Dendritic cell treated with granulocyte-macrophage colony-stimulating factor and Interleukin-4, amounts not matched to agents 40 ng/mL and 50 ng/mL, for 4 days (primary cell): ENCODE measurements at regions of chr14 and their contacts with region 1.

Region 1: DNA sequence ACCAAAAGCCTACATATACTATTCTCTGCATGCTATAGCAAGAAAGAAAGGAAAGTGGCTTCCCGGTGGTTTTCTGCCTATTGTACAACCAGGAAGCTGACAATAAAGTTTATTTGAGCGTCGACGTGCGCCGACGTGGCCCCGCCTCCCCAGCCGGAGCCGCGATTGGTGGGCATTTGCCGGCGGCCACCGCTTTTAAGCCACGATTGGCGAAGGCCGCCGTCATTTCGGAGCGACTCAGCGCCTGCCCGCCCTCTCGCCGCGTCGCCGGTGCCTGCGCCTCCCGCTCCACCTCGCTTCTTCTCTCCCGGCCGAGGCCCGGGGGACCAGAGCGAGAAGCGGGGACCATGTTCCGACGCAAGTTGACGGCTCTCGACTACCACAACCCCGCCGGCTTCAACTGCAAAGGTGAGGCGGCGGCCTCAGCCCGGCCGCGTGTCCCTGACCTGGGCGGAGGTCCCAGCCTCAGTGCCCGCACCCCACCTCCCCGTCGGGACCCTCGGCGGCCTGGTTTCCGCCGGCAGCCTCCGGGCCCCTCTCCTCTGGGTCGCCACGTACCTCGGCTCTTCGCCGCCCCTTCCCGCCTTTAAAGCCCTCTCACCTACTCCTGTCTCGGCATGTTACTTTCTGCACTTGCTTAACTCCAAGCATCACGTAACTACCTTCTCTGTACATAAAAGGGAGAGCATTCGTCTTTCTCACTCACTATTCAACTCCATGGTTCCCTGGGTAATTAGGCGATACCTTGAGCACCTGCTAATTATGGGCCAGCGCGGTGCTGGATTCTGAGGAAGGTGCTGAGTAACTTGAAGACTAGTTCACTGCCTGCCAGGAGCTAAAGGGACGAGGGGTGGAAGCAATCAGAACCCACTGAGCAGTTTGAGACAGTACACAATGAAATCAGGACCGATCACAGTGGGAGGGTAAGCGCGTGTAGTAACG is at the start of gene RTRAF:
- H3K4me3 Mint-ChIP-seq: peak within 1 kb of the TSS; percentile 79
- H3K27ac Mint-ChIP-seq: peak within 1 kb of the TSS; percentile 83
- H3K4me1 Mint-ChIP-seq: peaks cover 20% of the 10 kb centered on the region
- H3K27me3 Mint-ChIP-seq: no peaks in the 10 kb centered on the region

Region 2: DNA sequence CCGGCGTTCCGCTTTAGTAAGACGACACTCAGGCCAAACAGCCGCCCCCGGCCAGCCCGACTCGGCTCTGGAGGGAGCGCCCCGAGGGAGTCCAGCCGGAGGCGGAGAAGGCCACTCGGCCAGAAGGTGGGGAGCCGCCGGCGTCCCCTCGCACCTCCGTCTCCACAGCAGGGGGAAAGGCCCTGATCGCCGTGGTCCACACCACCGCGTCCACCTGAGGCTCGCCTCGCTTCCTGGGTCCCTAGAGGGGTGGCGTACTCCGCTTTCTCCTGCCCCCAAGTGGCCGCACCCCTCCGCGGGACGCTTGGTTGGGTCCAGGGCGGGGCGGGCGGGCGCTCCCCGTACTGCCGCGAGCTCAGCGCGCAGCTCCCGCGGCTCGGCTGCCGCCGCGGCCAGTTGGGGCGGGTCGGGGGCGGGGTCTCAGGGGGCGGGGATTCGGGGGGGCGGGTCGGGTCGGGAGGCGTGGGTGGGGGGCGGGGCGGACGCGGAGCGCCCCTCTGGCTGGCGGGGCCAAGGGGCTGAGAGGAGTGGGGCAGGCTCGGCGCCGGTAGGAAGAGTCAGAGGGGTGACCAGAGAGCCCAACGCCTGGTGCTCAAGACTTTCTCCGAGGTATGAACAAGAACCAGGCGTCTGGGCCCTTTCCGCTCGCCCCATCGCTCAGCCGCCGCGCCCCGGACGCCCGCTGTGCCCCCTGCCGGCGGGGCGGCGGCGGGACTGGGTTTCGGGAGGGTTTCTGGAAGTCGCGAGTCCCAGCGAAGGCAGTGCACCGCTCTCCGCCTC is 338.0 kb before region 1 on chr14 and contains the start of gene FRMD6:
- intact Hi-C with region 1: loop called (anchors 5 kb)
- H3K4me3 Mint-ChIP-seq: peak within 1 kb of the TSS; percentile 87
- H3K27ac Mint-ChIP-seq: peak within 1 kb of the TSS; percentile 92
- H3K4me1 Mint-ChIP-seq: peaks cover 23% of the 10 kb centered on the region
- H3K27me3 Mint-ChIP-seq: peaks cover 24% of the 10 kb centered on the region

Region 3: DNA sequence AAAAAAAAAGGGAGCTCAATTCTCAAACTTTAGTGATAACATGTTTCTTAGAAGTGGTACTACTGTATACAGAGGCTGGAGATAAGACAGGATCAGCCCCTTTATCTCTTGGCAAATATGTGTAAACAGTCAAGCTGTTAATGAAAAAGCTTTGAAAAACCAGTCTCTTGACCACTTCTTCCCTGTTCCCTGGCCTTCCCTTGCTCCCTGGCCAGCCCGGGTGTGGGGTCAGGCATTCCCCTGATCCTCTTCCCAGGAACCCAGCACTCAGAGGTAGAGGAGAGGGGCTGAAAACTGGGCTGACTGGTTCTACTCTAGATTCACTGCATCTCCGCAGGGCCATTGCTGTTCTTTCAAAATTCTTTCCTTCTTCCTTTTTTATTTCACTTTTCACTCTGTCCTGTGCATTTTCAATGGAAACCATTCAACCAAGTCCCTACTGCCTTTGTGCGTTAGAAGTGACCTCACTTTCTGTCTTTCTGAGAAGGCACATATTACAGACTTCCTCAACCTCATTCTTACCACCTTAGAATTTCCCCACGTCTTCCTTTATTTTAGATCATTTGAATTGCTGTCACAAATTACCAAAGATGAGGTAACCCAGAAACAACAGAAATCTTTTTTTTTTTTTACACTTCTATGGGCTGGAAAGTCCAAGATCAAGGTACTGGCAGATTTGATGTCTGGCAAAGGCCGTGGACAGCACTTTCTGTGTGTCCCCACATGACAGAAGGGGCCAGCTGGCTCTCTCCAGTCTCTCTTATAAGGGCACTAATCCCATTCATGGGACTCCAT is 123.4 kb before region 1 on chr14:
- intact Hi-C with region 1: loop called (anchors 5 kb)
- H3K4me3 Mint-ChIP-seq: no peak overlapping the region
- H3K27ac Mint-ChIP-seq: no peak overlapping the region
- H3K4me1 Mint-ChIP-seq: peaks cover 26% of the 10 kb centered on the region
- H3K27me3 Mint-ChIP-seq: no peaks in the 10 kb centered on the region

Region 4: DNA sequence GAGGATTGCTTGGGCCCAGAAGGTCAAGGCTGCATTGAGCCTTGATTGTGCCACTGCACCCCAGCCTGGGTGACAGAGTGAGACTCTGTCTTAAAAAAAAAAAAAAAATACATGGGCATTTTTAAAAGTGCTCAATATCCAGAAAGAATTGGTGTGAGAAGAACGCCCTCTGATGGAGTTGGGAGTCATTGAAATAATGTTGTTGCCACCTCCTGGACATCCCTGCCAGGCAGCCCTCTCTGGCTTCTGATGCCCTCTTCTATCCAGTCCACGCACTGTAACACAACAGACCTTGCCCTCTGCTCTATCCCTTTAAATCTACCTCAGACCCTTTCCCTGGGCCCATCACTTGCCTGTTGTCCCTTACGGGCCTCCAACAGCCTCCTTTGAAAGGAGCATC is 282.8 kb after region 1 on chr14:
- intact Hi-C with region 1: loop called (anchors 10 kb)
- H3K4me3 Mint-ChIP-seq: no peak overlapping the region
- H3K27ac Mint-ChIP-seq: no peak overlapping the region
- H3K4me1 Mint-ChIP-seq: peaks cover 18% of the 10 kb centered on the region
- H3K27me3 Mint-ChIP-seq: peaks cover 44% of the 10 kb centered on the region